Activated B cell treated with CpG ODN at 0.5 μM for 24 hours (primary cell): ENCODE measurements at regions of chr22 and their contacts with region 1.

Region 1: GRCh38 chr22:21641789-21642583 is at the start of gene SDF2L1:
- DNase-seq: peak; percentile 95
- ATAC-seq: peak; percentile 95
- H3K4me3 Mint-ChIP-seq: peak within 1 kb of the TSS; percentile 89
- H3K27ac Mint-ChIP-seq: peak within 1 kb of the TSS; percentile 88
- H3K4me1 Mint-ChIP-seq: peaks cover 27% of the 10 kb centered on the region
- H3K27me3 Mint-ChIP-seq: no peaks in the 10 kb centered on the region
- CTCF ChIP-seq: no peak
- total RNA-seq, gene SDF2L1: 40.0 and 43.3 TPM in 2 replicates

Region 2: GRCh38 chr22:21587803-21588611 is 54.0 kb before region 1 on chr22:
- CTCF ChIA-PET with region 1: interaction called, 7 read pairs
- POLR2A ChIA-PET with region 1: interaction called, 3 read pairs
- intact Hi-C with region 1: loop called (anchors 5 kb)
- DNase-seq: peak; percentile 27
- ATAC-seq: peak; percentile 88
- H3K4me3 Mint-ChIP-seq: peak overlapping the region; percentile 45
- H3K27ac Mint-ChIP-seq: peak overlapping the region; percentile 83
- H3K4me1 Mint-ChIP-seq: peaks cover 66% of the 10 kb centered on the region
- H3K27me3 Mint-ChIP-seq: no peaks in the 10 kb centered on the region
- CTCF ChIP-seq: no peak

Region 3: GRCh38 chr22:21599053-21599893 is 42.7 kb before region 1 on chr22:
- CTCF ChIA-PET with region 1: no interaction called
- POLR2A ChIA-PET with region 1: no interaction called
- intact Hi-C with region 1: no loop called
- DNase-seq: no peak
- ATAC-seq: no peak
- H3K4me3 Mint-ChIP-seq: no peak overlapping the region
- H3K27ac Mint-ChIP-seq: no peak overlapping the region
- H3K4me1 Mint-ChIP-seq: peaks cover 26% of the 10 kb centered on the region
- H3K27me3 Mint-ChIP-seq: no peaks in the 10 kb centered on the region
- CTCF ChIP-seq: no peak

Region 4: DNA sequence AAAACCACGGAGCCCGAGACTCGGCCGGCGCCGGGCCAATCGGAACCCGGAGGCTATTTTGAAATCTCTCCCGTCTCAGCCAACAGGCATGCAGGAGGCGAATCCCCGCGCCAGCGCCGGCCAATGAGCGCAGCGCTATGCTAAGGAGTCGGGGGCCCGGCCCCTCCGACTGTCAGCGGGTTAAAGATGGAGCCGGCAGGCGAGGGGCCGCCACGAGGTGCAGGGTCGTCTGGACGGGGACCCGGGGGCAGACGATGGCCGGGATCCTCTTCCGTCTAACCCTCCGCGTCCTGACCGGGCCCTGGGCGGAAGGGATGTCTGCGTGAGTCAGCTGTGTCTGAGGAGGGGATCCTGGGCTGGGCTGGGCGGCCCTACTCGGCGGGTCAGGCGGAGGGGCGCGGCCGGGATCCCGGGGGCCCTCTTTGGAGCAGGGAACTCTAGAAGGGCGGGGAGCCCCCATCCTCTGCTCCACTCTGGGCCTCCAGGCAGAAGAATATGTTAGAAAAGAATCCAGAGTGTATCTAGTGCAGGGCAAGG is 10.1 kb after region 1 on chr22:
- CTCF ChIA-PET with region 1: interaction called, 7 read pairs
- POLR2A ChIA-PET with region 1: interaction called, 16 read pairs
- intact Hi-C with region 1: loop called (anchors 1 kb)
- DNase-seq: peak; percentile 77
- ATAC-seq: peak; percentile 98
- H3K4me3 Mint-ChIP-seq: peak overlapping the region; percentile 90
- H3K27ac Mint-ChIP-seq: no peak overlapping the region
- H3K4me1 Mint-ChIP-seq: peaks cover 21% of the 10 kb centered on the region
- H3K27me3 Mint-ChIP-seq: no peaks in the 10 kb centered on the region
- CTCF ChIP-seq: no peak

Region 5: GRCh38 chr22:21666786-21667185 is 24.8 kb after region 1 on chr22:
- CTCF ChIA-PET with region 1: no interaction called
- POLR2A ChIA-PET with region 1: interaction called, 27 read pairs
- intact Hi-C with region 1: no loop called
- DNase-seq: no peak
- ATAC-seq: no peak
- H3K4me3 Mint-ChIP-seq: peak overlapping the region; percentile 99
- H3K27ac Mint-ChIP-seq: peak overlapping the region; percentile 50
- H3K4me1 Mint-ChIP-seq: peaks cover 25% of the 10 kb centered on the region
- H3K27me3 Mint-ChIP-seq: no peaks in the 10 kb centered on the region
- CTCF ChIP-seq: no peak